ENCODE measurements at regions of chr5 and their contacts with region 1.

Region 1: GRCh38 chr5:81751009-81751835 is at the start of gene SSBP2:
- DNase-seq: peak; percentile 99 to 100 (median 100)
- H3K4me3 ChIP-seq: peak within 1 kb of the TSS in 3 of 4 donors; percentile 44 to 94 (median 92)
- H3K27ac ChIP-seq: peak within 1 kb of the TSS; percentile 78 to 99 (median 91)
- H3K4me1 ChIP-seq: peaks cover 11 to 31% of the 10 kb centered on the region in 2 donors
- H3K27me3 ChIP-seq: no peaks in the 10 kb centered on the region
- CTCF ChIP-seq: peak in 3 of 6 experiments; percentile 7 to 32 (median 12)
- POLR2A ChIP-seq: peak; percentile 63 to 87
- total RNA-seq, gene SSBP2: 16.2 to 424 (median 26.7) TPM

Region 2: DNA sequence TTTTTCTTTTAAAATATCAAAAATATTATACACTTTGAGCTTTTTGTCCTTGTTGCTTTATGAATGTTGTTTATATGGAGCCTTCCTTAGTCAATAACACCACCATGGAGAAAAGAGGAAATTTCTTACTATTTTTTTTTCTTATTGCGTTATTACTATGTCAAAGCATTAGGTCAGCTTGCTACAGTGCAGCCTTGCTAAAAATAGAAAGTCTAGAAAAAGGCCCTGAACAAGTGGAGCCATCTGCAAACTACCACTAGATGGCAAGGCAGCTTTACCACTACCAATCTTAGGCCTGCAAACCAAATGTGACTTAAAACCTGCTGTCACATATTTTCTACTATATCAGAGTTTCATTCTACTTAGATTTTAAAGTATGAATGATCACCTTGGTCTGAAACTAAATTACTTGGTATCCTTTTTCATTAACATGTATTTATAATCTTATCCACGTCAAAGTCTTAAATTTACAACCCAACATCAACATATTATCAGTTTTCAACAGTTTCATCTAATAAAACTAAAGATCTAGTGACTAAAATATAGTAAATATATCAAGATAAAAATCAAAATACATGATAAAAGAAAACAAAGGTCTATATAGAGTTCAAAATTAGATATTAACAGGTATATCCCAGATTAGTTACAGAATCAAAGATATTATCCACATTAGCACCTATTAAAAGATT is 244.2 kb before region 1 on chr5:
- intact Hi-C with region 1: loop called in 1 of 2 experiments (anchors 10 kb)
- DNase-seq: peak; percentile 62 to 91 (median 72)
- H3K4me3 ChIP-seq: no peak overlapping the region
- H3K27ac ChIP-seq: peak overlapping the region in 1 of 5 donors; percentile 55
- H3K4me1 ChIP-seq: peaks cover 0 to 6% of the 10 kb centered on the region in 2 donors
- H3K27me3 ChIP-seq: no peaks in the 10 kb centered on the region
- CTCF ChIP-seq: peak; percentile 71 to 95 (median 93)
- POLR2A ChIP-seq: no peak

Region 3: GRCh38 chr5:81787474-81788242 is 36.4 kb after region 1 on chr5:
- intact Hi-C with region 1: loop called (anchors 5 kb)
- DNase-seq: peak; percentile 73 to 84 (median 77)
- H3K4me3 ChIP-seq: peak overlapping the region in 1 of 4 donors; percentile 16
- H3K27ac ChIP-seq: peak overlapping the region in 1 of 5 donors; percentile 5
- H3K4me1 ChIP-seq: peaks cover 10 to 22% of the 10 kb centered on the region in 2 donors
- H3K27me3 ChIP-seq: no peaks in the 10 kb centered on the region
- CTCF ChIP-seq: no peak
- POLR2A ChIP-seq: peak in 1 of 2 donors; percentile 12

Region 4: GRCh38 chr5:81794226-81794625 is 43.0 kb after region 1 on chr5:
- intact Hi-C with region 1: loop called (anchors 5 kb)
- DNase-seq: no peak
- H3K4me3 ChIP-seq: no peak overlapping the region
- H3K27ac ChIP-seq: no peak overlapping the region
- H3K4me1 ChIP-seq: no peaks in the 10 kb centered on the region
- H3K27me3 ChIP-seq: no peaks in the 10 kb centered on the region
- CTCF ChIP-seq: no peak
- POLR2A ChIP-seq: no peak

Region 5: DNA sequence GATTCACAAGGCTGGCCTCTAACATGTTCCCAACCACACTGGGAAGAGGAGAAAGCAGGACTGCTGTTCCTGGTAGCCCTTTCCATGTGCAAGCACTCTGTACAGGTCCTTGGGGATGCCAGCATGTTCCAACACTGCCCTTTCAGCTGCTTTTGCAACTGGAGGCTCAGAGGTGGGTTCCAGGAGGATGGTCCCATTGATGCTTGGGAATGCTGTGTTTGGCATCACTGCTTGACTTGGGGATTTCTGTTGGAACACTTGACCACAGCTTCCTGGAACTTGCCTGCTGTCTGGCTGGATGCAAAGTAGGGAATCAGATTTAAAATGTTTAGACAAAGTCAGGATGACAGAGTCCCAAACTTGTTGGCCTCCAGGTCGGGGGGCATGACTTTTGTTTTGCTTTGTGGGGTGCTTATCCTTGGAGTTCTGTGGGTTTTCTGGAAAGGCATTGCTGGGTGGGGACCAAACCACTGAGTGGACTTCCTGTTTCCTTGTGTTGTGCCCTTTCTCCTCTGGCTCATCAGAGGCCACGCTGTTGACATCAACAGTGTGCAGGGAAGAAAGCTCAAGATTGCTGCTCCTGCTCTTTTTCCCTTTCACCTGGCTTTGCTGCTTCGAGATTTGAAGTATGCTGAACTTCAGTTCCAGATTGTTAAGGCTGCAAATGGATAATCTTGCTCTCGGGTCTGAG is 675.4 kb after region 1 on chr5:
- intact Hi-C with region 1: no loop called
- DNase-seq: peak in 1 of 7 donors; percentile 29
- H3K4me3 ChIP-seq: no peak overlapping the region
- H3K27ac ChIP-seq: peak overlapping the region in 1 of 5 donors; percentile 2
- H3K4me1 ChIP-seq: no peaks in the 10 kb centered on the region
- H3K27me3 ChIP-seq: no peaks in the 10 kb centered on the region
- CTCF ChIP-seq: no peak
- POLR2A ChIP-seq: no peak

Measured in adrenal gland (tissue), 19 donors.